Activated naive CD8-positive, alpha-beta T cell treated with anti-CD3 and anti-CD28 coated beads, Interleukin-2, amount 10 ng/mL, durations not matched to agents 7 days and 5 days (primary cell): ENCODE measurements at regions of chr14 and their contacts with region 1.

Region 1: DNA sequence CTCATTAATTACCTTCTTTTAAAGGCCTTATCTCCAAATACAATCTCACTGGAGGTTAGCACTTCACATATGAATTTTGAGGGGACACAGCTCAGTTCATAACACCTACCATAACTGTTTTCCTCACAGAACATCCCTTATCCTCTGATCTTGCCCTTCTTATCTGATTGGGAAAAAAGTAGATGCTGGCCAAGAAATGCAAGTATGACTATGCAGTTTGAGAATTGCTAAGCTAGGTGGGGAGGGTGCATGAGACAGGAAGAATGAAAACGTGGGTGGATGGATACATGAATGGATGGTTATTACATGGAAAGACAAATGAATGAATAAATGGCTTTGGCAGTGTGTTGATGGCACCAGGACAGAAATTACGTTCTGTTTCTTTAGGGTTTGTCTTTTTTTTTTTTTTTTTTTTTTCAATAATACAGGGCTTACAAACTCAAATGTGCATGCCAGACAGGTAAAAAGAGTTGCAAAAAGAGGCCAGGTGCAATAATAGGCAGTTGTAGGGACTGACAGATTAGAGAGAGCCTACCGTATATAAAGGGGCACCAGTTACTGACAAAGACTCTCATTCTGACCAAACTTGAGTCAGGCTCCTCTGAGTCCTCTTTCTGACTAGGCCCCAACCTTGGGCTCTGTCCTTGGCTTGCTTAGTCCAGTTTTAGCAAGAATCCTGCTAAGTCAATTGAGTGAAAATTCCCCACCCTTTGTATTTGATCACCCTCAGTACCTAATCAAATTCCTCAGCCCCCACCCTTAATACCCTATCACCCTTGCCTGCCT is 304.9 kb downstream of the ZFP36L1 start:
- DNase-seq: no peak
- ATAC-seq: no peak
- H3K4me3 Mint-ChIP-seq: no peak overlapping the region
- H3K27ac Mint-ChIP-seq: no peak overlapping the region
- H3K4me1 Mint-ChIP-seq: peaks cover 19% of the 10 kb centered on the region
- H3K27me3 Mint-ChIP-seq: no peaks in the 10 kb centered on the region

Region 2: GRCh38 chr14:68318828-68319227 is 169.2 kb before region 1 on chr14:
- POLR2A ChIA-PET with region 1: no interaction called
- DNase-seq: no peak
- ATAC-seq: no peak
- H3K4me3 Mint-ChIP-seq: no peak overlapping the region
- H3K27ac Mint-ChIP-seq: no peak overlapping the region
- H3K4me1 Mint-ChIP-seq: peaks cover 2% of the 10 kb centered on the region
- H3K27me3 Mint-ChIP-seq: no peaks in the 10 kb centered on the region

Region 3: DNA sequence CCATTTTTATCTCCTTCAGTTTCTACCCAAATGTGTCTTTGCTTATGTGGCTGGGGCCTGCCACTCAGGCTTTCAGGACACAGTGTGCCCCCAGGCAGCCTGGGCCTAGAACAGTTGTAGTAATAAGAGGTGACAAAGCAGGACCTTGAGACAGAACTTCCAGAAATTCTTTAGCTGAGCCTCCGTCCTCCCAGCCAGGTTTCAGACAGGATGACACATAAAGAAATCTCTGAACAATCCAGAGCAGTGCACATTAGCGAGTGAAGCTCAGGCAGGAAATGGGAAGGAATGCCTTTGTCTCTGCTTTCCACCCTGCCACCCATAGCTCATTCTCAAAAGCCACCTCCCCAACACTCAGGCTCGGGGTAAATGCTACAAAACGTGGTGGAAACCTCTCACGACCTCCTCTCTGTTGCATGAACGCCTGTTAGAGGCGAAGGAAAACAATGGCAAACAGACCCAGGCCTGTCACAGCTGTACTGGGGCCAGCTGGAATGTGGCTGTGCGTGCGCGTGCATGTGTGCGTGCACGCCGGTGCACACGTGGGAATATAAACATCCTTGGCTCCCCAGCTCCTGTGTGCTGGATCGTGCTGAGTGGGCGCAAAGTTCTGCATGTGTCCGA is 18.1 kb after region 1 on chr14:
- POLR2A ChIA-PET with region 1: interaction called, 10 read pairs
- DNase-seq: no peak
- ATAC-seq: no peak
- H3K4me3 Mint-ChIP-seq: no peak overlapping the region
- H3K27ac Mint-ChIP-seq: no peak overlapping the region
- H3K4me1 Mint-ChIP-seq: peaks cover 23% of the 10 kb centered on the region
- H3K27me3 Mint-ChIP-seq: no peaks in the 10 kb centered on the region